Activated naive CD4-positive, alpha-beta T cell treated with anti-CD3 and anti-CD28 coated beads for 36 hours (primary cell): ENCODE measurements at regions of chr1 and their contacts with region 1.

Region 1: DNA sequence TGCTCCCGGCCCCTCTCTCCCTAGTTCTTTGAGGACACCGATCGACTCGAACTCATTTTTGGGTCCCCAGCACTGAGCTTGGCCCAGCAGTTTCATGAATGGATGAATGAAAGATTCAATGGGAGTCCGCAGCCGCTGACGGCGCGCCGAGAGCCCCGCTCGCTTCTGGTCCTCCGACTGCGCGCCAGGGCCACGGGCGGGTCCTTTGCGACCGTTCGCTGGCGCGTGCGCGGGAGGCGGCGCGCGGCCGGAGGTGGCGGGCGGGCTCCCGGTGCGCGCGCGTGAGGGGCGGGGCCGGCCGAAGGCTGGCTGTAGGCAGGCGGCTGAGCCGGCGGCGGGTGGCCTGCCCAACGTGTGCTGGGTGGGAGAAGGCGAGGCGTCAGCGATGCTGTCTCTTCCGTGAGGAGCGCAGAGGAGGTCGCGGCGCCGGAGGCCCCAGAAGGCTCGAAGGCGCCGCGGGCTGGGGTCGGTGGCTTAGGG is at the start of gene MAST2:
- DNase-seq: peak; percentile 84
- H3K4me3 Mint-ChIP-seq: peak within 1 kb of the TSS; percentile 86
- H3K27ac Mint-ChIP-seq: peak within 1 kb of the TSS; percentile 74
- H3K4me1 Mint-ChIP-seq: peaks cover 27% of the 10 kb centered on the region
- H3K27me3 Mint-ChIP-seq: no peaks in the 10 kb centered on the region
- total RNA-seq, gene MAST2: 21.7 to 22.1 TPM

Region 2: DNA sequence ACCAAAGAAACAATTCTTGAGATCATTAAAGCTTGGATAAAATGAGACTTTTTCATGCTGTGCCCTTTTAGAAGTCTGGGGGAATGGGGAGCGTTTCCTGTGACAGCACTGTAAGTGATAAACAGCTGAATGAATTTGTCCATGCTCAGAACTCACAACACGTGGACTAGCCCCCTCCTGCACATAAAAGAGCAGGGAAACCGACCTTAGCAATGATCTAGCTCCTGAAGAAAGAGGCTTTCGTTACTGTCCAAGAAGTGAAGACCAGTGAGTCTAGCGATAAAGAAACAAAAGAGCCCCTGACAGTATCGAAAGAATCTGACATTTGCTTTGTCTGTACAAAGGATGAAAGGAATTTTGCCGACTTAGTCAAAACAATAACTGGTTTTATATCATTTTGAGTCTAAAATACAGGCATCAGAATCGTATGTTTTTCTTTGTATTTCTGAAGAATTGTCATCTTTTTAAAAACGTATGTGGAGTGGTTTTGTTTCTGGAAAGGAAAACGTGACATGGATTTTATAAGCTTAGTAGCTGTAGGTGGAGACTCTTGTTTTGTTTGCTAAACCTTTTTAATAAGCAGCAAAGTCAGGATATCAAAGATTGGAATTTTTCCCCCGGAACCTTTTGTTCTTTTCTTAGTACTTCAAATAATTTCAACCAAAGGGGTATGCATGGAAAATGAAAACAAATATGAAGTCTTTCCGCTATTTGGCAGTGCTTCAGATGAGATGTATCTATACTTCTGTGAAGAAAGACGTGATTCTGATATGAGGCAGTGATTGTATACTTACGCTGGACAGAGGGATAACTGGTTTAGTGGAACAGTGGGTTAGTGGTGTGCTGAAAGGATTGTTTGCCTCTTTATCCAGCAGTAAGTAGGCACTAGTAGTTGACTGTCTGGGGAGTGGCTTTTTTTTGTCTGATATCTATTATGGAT is 61.1 kb after region 1 on chr1:
- CTCF ChIA-PET with region 1: no interaction called
- intact Hi-C with region 1: loop called (anchors 2 kb)
- DNase-seq: no peak
- H3K4me3 Mint-ChIP-seq: no peak overlapping the region
- H3K27ac Mint-ChIP-seq: no peak overlapping the region
- H3K4me1 Mint-ChIP-seq: peaks cover 43% of the 10 kb centered on the region
- H3K27me3 Mint-ChIP-seq: peaks cover 3% of the 10 kb centered on the region